G401 (cell line): ENCODE measurements at regions of chr11 and their contacts with region 1.

Region 1: GRCh38 chr11:77569676-77570070 is 20.1 kb upstream of the AQP11 start:
- DNase-seq: no peak

Region 2: DNA sequence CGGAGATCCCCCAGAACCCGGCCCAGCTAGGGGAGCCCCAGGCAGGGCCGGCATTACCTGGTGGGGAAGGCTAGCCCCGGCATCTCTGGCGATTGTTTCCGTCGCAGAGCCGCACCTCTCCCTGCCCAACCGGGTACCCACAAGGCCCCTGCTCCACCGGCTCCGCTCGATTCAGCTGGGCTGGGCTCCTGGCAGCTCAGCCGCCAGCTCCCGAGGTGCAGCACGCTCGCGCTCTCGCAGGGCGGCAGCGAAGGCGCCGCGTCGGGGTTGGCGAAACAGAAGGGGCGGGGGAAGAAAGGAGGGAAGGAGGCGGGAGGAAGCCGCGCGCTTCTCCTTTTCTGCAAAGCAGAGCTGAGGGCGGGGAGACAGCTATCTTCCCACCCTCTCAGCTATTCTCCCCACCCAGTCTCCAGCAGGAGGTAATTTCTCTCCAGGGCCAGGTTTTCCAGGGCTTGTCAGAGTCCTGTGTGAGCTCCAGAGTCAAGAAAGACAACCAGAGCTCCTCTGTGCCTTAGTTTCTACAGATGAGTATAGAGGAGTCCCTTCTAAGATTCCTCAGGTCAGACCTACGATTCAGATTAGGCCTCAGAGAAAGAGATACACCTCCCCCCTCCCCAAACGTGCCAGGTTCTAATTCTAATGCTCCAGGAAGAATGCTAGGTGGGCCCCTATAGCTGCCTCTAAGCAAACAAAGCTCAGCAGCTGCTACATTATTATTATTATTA is 157.8 kb before region 1 on chr11:
- in situ Hi-C with region 1: no loop called
- DNase-seq: peak; percentile 93

Region 3: DNA sequence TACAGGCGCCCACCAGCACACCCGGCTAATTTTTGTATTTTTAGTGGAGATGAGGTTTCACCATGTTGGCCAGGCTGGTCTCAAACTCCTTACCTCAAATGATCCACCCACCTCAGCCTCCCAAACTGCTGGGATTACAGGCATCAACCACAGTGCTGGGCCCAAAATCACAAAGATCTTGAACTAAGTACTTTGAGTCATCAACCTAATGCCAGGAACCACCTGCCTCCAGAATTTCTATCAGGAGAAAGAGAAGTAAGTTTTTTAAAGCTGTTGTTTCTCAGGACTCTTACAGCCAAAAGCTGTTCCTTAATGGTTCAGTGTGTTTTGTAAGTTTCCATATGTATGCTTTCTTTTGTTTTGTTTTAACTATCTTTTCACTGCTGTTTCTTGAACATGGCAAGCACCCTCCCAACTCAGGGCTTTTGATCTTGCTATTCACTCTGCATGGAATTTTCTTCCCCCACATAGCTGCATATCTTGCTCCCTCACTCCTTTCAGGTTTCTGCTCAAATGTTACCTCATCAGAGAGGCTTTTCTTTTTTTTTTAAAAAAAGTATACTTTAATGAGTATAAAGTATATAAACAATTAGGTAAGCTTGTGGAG is 89.8 kb before region 1 on chr11:
- in situ Hi-C with region 1: loop called (anchors 5 kb)
- DNase-seq: no peak